Activated naive CD4-positive, alpha-beta T cell treated with anti-CD3 and anti-CD28 coated beads for 36 hours (primary cell): ENCODE measurements at regions of chr10 and their contacts with region 1.

Region 1: GRCh38 chr10:29735596-29736318 is 101.0 kb upstream of the SVIL start:
- DNase-seq: peak; percentile 86
- H3K4me3 Mint-ChIP-seq: peak overlapping the region; percentile 78
- H3K27ac Mint-ChIP-seq: peak overlapping the region; percentile 73
- H3K4me1 Mint-ChIP-seq: peaks cover 34% of the 10 kb centered on the region
- H3K27me3 Mint-ChIP-seq: peaks cover 8% of the 10 kb centered on the region

Region 2: GRCh38 chr10:29386342-29386999 is 349.3 kb before region 1 on chr10:
- CTCF ChIA-PET with region 1: no interaction called
- intact Hi-C with region 1: loop called (anchors 10 kb)
- DNase-seq: peak; percentile 11
- H3K4me3 Mint-ChIP-seq: no peak overlapping the region
- H3K27ac Mint-ChIP-seq: no peak overlapping the region
- H3K4me1 Mint-ChIP-seq: no peaks in the 10 kb centered on the region
- H3K27me3 Mint-ChIP-seq: peaks cover 4% of the 10 kb centered on the region

Region 3: GRCh38 chr10:29517352-29517923 is 218.3 kb before region 1 on chr10:
- CTCF ChIA-PET with region 1: interaction called, 5 read pairs
- intact Hi-C with region 1: loop called (anchors 2 kb)
- DNase-seq: no peak
- H3K4me3 Mint-ChIP-seq: no peak overlapping the region
- H3K27ac Mint-ChIP-seq: no peak overlapping the region
- H3K4me1 Mint-ChIP-seq: no peaks in the 10 kb centered on the region
- H3K27me3 Mint-ChIP-seq: no peaks in the 10 kb centered on the region

Region 4: DNA sequence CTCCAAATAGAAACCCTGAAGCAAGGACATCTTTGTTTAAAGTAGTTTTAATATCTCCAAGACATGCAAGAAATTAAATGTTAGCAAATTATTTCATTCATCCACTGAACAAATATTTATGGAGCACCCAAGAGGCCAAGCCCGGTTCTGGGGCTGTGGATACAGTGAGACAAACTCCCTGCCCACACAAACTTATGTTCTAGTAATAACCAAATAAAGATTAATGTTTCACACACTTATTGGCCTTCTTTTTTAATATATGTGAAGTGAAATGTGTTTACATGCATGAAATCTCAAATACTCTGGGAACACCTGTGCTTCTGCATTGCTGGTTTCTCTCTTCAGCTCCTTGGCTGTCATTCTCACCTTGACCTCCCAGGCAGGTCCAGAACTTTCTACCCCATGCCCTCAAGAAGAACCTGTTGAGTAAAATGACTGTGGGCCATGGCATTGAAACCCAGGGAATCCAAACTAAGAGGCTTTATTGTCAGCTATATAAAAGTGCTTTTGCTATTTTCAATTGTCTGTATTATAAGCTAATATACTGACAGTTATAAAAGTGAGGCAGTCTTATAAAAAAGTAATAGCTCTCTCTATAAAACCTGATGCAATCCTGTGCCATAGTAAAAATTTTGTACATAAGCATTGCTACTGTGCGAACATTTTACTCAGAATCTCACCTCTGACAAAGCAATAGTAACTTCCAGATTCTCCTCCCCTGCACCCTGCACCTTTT is 144.7 kb before region 1 on chr10:
- CTCF ChIA-PET with region 1: interaction called, 3 read pairs
- intact Hi-C with region 1: loop called (anchors 1 kb)
- DNase-seq: no peak
- H3K4me3 Mint-ChIP-seq: no peak overlapping the region
- H3K27ac Mint-ChIP-seq: no peak overlapping the region
- H3K4me1 Mint-ChIP-seq: peaks cover 8% of the 10 kb centered on the region
- H3K27me3 Mint-ChIP-seq: no peaks in the 10 kb centered on the region

Region 5: DNA sequence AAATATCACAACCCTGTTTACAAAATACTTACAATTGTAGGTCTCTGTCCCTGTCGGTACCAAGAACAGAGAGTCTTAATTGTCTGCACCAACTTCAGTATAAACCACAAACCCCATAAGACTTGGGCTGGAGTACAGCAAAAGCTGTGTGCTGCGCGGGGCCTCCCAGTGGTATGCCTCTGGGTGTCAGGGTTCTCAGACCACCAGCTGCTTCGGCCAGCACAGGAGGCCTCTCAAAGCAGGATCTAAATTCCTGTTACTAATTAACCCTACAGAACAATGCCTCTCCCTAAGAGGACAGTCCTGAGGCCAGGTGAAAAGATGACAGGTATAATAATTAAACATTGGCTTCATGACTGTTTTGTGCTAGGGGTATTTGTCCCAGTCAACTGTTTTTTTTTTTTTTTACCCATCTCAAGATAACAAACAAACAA is 100.0 kb before region 1 on chr10:
- CTCF ChIA-PET with region 1: no interaction called
- intact Hi-C with region 1: loop called (anchors 1 kb)
- DNase-seq: no peak
- H3K4me3 Mint-ChIP-seq: no peak overlapping the region
- H3K27ac Mint-ChIP-seq: no peak overlapping the region
- H3K4me1 Mint-ChIP-seq: peaks cover 42% of the 10 kb centered on the region
- H3K27me3 Mint-ChIP-seq: no peaks in the 10 kb centered on the region

Region 6: GRCh38 chr10:29689001-29689400 is 46.8 kb before region 1 on chr10:
- CTCF ChIA-PET with region 1: interaction called, 4 read pairs
- intact Hi-C with region 1: loop called (anchors 1 kb)
- DNase-seq: peak; percentile 50
- H3K4me3 Mint-ChIP-seq: no peak overlapping the region
- H3K27ac Mint-ChIP-seq: peak overlapping the region; percentile 30
- H3K4me1 Mint-ChIP-seq: peaks cover 39% of the 10 kb centered on the region
- H3K27me3 Mint-ChIP-seq: no peaks in the 10 kb centered on the region

Region 7: GRCh38 chr10:29702273-29703164 is 33.2 kb before region 1 on chr10:
- CTCF ChIA-PET with region 1: interaction called, 4 read pairs
- intact Hi-C with region 1: loop called (anchors 5 kb)
- DNase-seq: peak; percentile 11
- H3K4me3 Mint-ChIP-seq: peak overlapping the region; percentile 40
- H3K27ac Mint-ChIP-seq: no peak overlapping the region
- H3K4me1 Mint-ChIP-seq: peaks cover 40% of the 10 kb centered on the region
- H3K27me3 Mint-ChIP-seq: no peaks in the 10 kb centered on the region